ENCODE measurements at regions of chr13 and their contacts with region 1.

Region 1: GRCh38 chr13:51844862-51845573 is at the start of gene TMEM272:
- DNase-seq: peak in 7 of 9 experiments; percentile 35 to 63 (median 54)
- ATAC-seq: peak; percentile 96
- H3K4me3 ChIP-seq: no peak within 1 kb of the TSS
- H3K4me3 Mint-ChIP-seq: peak within 1 kb of the TSS; percentile 53
- H3K27ac ChIP-seq: no peak within 1 kb of the TSS
- H3K27ac Mint-ChIP-seq: no peak within 1 kb of the TSS
- H3K4me1 ChIP-seq: peaks cover 5% of the 10 kb centered on the region
- H3K4me1 Mint-ChIP-seq: peaks cover 8% of the 10 kb centered on the region
- H3K27me3 ChIP-seq: no peaks in the 10 kb centered on the region
- H3K27me3 Mint-ChIP-seq: peaks cover 4% of the 10 kb centered on the region
- CTCF ChIP-seq: peak; percentile 83
- total RNA-seq, gene TMEM272: 1.1 to 1.7 TPM

Region 2: DNA sequence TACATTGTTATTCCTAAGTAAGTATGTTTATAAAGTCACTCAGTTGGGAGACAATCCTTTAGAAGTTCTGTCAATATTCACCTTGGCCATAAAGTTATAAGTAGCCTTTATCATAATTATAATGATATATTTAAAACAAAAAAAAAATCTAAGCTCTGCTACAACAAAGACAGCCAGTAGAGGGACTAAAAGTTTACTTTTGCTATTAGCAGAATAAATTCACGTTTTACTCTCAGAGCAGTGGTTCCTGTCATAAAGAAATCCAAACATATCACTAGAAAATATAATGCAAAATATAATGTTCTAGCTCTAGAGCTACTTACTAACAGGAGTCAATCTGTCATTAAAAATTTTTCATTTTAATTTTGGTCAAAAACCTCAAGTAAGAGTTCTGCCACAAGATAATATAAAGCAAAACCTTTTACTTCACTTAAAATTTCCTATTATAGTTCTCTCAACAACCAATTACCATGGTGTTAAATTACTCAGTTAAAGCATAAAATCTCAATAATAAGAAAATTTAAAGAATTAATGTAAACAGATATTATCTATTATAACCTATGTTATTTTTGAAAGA is 409.9 kb before region 1 on chr13:
- CTCF ChIA-PET with region 1: no interaction called
- POLR2A ChIA-PET with region 1: no interaction called
- intact Hi-C with region 1: loop called in 1 of 2 experiments (anchors 5 kb)
- DNase-seq: peak in 2 of 9 experiments; percentile 39 to 60
- ATAC-seq: peak; percentile 57
- H3K4me3 ChIP-seq: no peak overlapping the region
- H3K4me3 Mint-ChIP-seq: no peak overlapping the region
- H3K27ac ChIP-seq: no peak overlapping the region
- H3K27ac Mint-ChIP-seq: no peak overlapping the region
- H3K4me1 ChIP-seq: peaks cover 3% of the 10 kb centered on the region
- H3K4me1 Mint-ChIP-seq: peaks cover 23% of the 10 kb centered on the region
- H3K27me3 ChIP-seq: no peaks in the 10 kb centered on the region
- H3K27me3 Mint-ChIP-seq: no peaks in the 10 kb centered on the region
- CTCF ChIP-seq: peak; percentile 87

Region 3: DNA sequence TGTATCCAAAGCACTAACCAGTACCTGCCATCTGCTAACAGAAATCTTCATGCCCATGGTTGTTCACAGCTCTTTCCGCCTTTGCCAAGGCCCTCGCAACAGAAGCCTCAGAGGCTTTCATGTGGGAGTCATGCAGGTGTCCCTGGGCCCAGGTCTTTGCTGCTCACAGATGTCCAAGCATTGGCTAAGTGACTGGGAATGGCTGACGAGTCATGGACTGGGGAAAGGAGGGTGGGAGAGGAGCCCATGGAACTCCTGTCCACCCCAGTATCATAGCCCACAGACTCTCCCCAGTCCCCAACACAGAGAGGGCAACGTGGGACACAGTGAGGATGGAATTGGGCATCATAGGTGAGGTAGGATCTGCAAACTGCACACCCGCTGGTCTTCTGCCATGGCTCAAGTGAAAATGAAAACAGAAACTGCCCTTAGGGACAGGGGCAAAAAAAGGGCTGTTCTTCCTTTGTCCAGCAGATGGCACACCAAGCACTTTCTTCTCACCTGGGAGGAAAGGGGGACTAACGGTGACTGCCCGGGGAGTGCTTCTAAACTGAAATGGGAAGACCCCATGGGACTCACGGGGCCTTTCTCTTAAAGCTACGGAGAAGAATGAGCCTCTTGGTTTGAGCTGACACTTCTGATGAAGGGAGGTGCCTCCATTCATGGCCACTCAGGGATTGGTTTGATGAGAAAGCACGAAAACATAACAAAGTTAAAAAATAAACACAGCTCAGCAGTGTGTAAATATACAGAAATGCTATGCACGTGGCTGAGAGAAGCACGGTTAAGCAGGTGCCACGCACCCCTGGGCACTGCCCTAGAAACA is 30.0 kb before region 1 on chr13:
- CTCF ChIA-PET with region 1: interaction called, 310 read pairs
- POLR2A ChIA-PET with region 1: no interaction called
- intact Hi-C with region 1: loop called (anchors 1 to 5 kb)
- DNase-seq: peak; percentile 49 to 89 (median 76)
- ATAC-seq: peak; percentile 82
- H3K4me3 ChIP-seq: peak overlapping the region; percentile 12 to 23
- H3K4me3 Mint-ChIP-seq: peak overlapping the region; percentile 70
- H3K27ac ChIP-seq: peak overlapping the region in 1 of 2 experiments; percentile 18
- H3K27ac Mint-ChIP-seq: peak overlapping the region; percentile 92
- H3K4me1 ChIP-seq: peaks cover 63% of the 10 kb centered on the region
- H3K4me1 Mint-ChIP-seq: peaks cover 79% of the 10 kb centered on the region
- H3K27me3 ChIP-seq: no peaks in the 10 kb centered on the region
- H3K27me3 Mint-ChIP-seq: no peaks in the 10 kb centered on the region
- CTCF ChIP-seq: peak; percentile 92

Region 4: GRCh38 chr13:51832471-51833152 is 12.4 kb before region 1 on chr13:
- CTCF ChIA-PET with region 1: interaction called, 14 read pairs
- POLR2A ChIA-PET with region 1: interaction called, 3 read pairs
- intact Hi-C with region 1: no loop called
- DNase-seq: peak; percentile 35 to 83 (median 64)
- ATAC-seq: peak; percentile 98
- H3K4me3 ChIP-seq: no peak overlapping the region
- H3K4me3 Mint-ChIP-seq: peak overlapping the region; percentile 36
- H3K27ac ChIP-seq: no peak overlapping the region
- H3K27ac Mint-ChIP-seq: peak overlapping the region; percentile 28
- H3K4me1 ChIP-seq: peaks cover 48% of the 10 kb centered on the region
- H3K4me1 Mint-ChIP-seq: peaks cover 60% of the 10 kb centered on the region
- H3K27me3 ChIP-seq: no peaks in the 10 kb centered on the region
- H3K27me3 Mint-ChIP-seq: no peaks in the 10 kb centered on the region
- CTCF ChIP-seq: peak; percentile 62

Region 5: DNA sequence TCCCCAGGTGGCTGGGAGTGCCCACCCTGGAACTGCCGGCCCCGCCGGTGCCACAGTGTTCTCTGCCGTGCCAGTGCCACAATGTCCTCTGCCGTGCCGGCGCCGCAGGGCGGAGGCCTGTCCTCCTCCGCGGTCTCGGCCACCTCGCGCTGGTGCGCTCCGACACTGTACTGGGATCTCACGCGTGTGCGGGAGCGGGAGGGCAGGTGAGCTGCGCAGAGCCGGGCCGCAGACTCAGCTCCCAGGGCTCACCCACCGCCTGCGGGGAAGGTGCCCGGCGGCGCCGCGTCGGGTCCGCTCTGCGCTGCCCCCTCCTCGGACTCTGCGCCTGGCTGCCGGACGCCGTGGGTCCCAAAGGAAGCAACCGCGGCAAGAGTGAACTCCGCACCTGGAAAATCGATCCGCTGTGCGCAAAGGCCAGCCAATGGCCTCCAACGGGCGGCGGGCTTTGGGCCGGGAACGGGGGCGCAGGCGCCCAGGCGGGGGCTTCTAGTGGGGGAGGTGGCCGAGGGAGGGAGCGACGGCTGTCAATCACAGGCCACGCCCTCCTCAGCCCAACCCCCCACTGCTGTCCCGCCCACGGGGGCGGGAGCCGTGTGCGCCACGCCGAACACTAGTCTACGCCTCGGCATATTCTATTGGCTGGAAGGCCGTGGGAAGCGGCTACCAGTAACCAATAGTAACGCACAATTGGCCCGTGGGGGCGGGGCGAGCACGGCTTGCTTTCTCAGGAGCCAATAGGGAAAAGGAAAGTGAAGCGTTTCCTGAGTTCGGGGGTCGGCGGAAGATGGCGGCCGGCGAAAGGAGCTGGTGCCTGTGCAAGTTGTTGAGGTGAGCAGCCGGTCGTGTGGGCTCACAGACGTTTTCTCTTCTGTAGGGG is 166.9 kb after region 1 on chr13 and contains the start of gene ALG11:
- CTCF ChIA-PET with region 1: no interaction called
- POLR2A ChIA-PET with region 1: no interaction called
- intact Hi-C with region 1: no loop called
- DNase-seq: peak; percentile 98 to 100 (median 99)
- ATAC-seq: peak; percentile 98
- H3K4me3 ChIP-seq: peak within 1 kb of the TSS; percentile 70 to 88
- H3K4me3 Mint-ChIP-seq: peak within 1 kb of the TSS; percentile 99
- H3K27ac ChIP-seq: peak within 1 kb of the TSS; percentile 57 to 75
- H3K27ac Mint-ChIP-seq: peak within 1 kb of the TSS; percentile 95
- H3K4me1 ChIP-seq: peaks cover 15% of the 10 kb centered on the region
- H3K4me1 Mint-ChIP-seq: peaks cover 35% of the 10 kb centered on the region
- H3K27me3 ChIP-seq: no peaks in the 10 kb centered on the region
- H3K27me3 Mint-ChIP-seq: peaks cover 7% of the 10 kb centered on the region
- CTCF ChIP-seq: no peak
- total RNA-seq, gene ALG11: 34.0 to 35.1 TPM

Region 6: GRCh38 chr13:52947921-52948373 is 1102.9 kb after region 1 on chr13:
- CTCF ChIA-PET with region 1: no interaction called
- POLR2A ChIA-PET with region 1: no interaction called
- intact Hi-C with region 1: no loop called
- DNase-seq: no peak
- ATAC-seq: no peak
- H3K4me3 ChIP-seq: no peak overlapping the region
- H3K4me3 Mint-ChIP-seq: no peak overlapping the region
- H3K27ac ChIP-seq: no peak overlapping the region
- H3K27ac Mint-ChIP-seq: no peak overlapping the region
- H3K4me1 ChIP-seq: no peaks in the 10 kb centered on the region
- H3K4me1 Mint-ChIP-seq: no peaks in the 10 kb centered on the region
- H3K27me3 ChIP-seq: no peaks in the 10 kb centered on the region
- H3K27me3 Mint-ChIP-seq: peaks cover 9% of the 10 kb centered on the region
- CTCF ChIP-seq: no peak

Measured in CD8-positive, alpha-beta T cell (primary cell).